CD4-positive, alpha-beta T cell (primary cell): ENCODE measurements at regions of chr3 and their contacts with region 1.

Region 1: GRCh38 chr3:179147873-179148615 is at the start of gene PIK3CA:
- DNase-seq: peak; percentile 85 to 99 (median 90)
- ATAC-seq: peak; percentile 74
- H3K4me3 ChIP-seq: peak within 1 kb of the TSS; percentile 73
- H3K4me3 Mint-ChIP-seq: peak within 1 kb of the TSS; percentile 95
- H3K27ac ChIP-seq: peak within 1 kb of the TSS; percentile 90 to 100
- H3K27ac Mint-ChIP-seq: peak within 1 kb of the TSS; percentile 91
- H3K4me1 ChIP-seq: peaks cover 2% of the 10 kb centered on the region
- H3K4me1 Mint-ChIP-seq: peaks cover 40% of the 10 kb centered on the region
- H3K27me3 ChIP-seq: no peaks in the 10 kb centered on the region
- H3K27me3 Mint-ChIP-seq: no peaks in the 10 kb centered on the region
- CTCF ChIP-seq: no peak
- total RNA-seq, gene PIK3CA: 57.1 to 63.1 TPM

Region 2: GRCh38 chr3:178623666-178624255 is 524.3 kb before region 1 on chr3:
- CTCF ChIA-PET with region 1: no interaction called
- POLR2A ChIA-PET with region 1: no interaction called
- intact Hi-C with region 1: no loop called
- DNase-seq: no peak
- ATAC-seq: no peak
- H3K4me3 ChIP-seq: no peak overlapping the region
- H3K4me3 Mint-ChIP-seq: no peak overlapping the region
- H3K27ac ChIP-seq: no peak overlapping the region
- H3K27ac Mint-ChIP-seq: no peak overlapping the region
- H3K4me1 ChIP-seq: no peaks in the 10 kb centered on the region
- H3K4me1 Mint-ChIP-seq: no peaks in the 10 kb centered on the region
- H3K27me3 ChIP-seq: no peaks in the 10 kb centered on the region
- H3K27me3 Mint-ChIP-seq: no peaks in the 10 kb centered on the region
- CTCF ChIP-seq: no peak

Region 3: DNA sequence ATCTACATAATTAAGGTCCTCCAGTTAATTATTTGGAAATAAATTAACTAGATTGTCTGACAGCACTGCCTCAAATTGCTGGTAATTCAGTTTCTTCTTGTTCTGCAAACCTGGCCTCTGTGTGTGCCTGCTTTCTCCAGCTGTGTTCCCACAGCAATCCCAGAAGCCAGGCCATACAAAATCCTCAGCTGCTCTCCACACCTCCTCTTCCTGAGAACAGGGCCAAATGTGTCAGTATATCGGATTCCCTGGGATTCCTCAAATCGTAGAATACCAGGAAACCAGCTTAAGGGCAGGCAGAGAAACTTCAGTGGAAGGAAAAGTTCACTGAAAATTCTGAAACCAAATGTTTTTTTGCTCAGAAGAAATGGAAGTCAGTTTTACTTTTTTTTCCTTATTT is 337.9 kb before region 1 on chr3:
- CTCF ChIA-PET with region 1: no interaction called
- POLR2A ChIA-PET with region 1: no interaction called
- intact Hi-C with region 1: no loop called
- DNase-seq: no peak
- ATAC-seq: no peak
- H3K4me3 ChIP-seq: no peak overlapping the region
- H3K4me3 Mint-ChIP-seq: no peak overlapping the region
- H3K27ac ChIP-seq: no peak overlapping the region
- H3K27ac Mint-ChIP-seq: no peak overlapping the region
- H3K4me1 ChIP-seq: no peaks in the 10 kb centered on the region
- H3K4me1 Mint-ChIP-seq: no peaks in the 10 kb centered on the region
- H3K27me3 ChIP-seq: no peaks in the 10 kb centered on the region
- H3K27me3 Mint-ChIP-seq: peaks cover 4% of the 10 kb centered on the region
- CTCF ChIP-seq: no peak

Region 4: GRCh38 chr3:179037351-179037750 is 110.7 kb before region 1 on chr3:
- CTCF ChIA-PET with region 1: no interaction called
- POLR2A ChIA-PET with region 1: interaction called, 29 read pairs
- intact Hi-C with region 1: no loop called
- DNase-seq: peak; percentile 27 to 78 (median 55)
- ATAC-seq: peak; percentile 95
- H3K4me3 ChIP-seq: peak overlapping the region; percentile 28
- H3K4me3 Mint-ChIP-seq: peak overlapping the region; percentile 73
- H3K27ac ChIP-seq: peak overlapping the region; percentile 47 to 63
- H3K27ac Mint-ChIP-seq: no peak overlapping the region
- H3K4me1 ChIP-seq: peaks cover 28% of the 10 kb centered on the region
- H3K4me1 Mint-ChIP-seq: peaks cover 12% of the 10 kb centered on the region
- H3K27me3 ChIP-seq: no peaks in the 10 kb centered on the region
- H3K27me3 Mint-ChIP-seq: no peaks in the 10 kb centered on the region
- CTCF ChIP-seq: no peak

Region 5: GRCh38 chr3:179108086-179108485 is 40.0 kb before region 1 on chr3:
- CTCF ChIA-PET with region 1: no interaction called
- POLR2A ChIA-PET with region 1: interaction called, 3 read pairs
- intact Hi-C with region 1: loop called in 1 of 2 experiments (anchors 5 kb)
- DNase-seq: no peak
- ATAC-seq: no peak
- H3K4me3 ChIP-seq: no peak overlapping the region
- H3K4me3 Mint-ChIP-seq: no peak overlapping the region
- H3K27ac ChIP-seq: no peak overlapping the region
- H3K27ac Mint-ChIP-seq: no peak overlapping the region
- H3K4me1 ChIP-seq: no peaks in the 10 kb centered on the region
- H3K4me1 Mint-ChIP-seq: no peaks in the 10 kb centered on the region
- H3K27me3 ChIP-seq: no peaks in the 10 kb centered on the region
- H3K27me3 Mint-ChIP-seq: peaks cover 13% of the 10 kb centered on the region
- CTCF ChIP-seq: no peak

Region 6: GRCh38 chr3:179196098-179196497 is 48.1 kb after region 1 on chr3:
- CTCF ChIA-PET with region 1: interaction called, 3 read pairs
- POLR2A ChIA-PET with region 1: interaction called, 28 read pairs
- intact Hi-C with region 1: loop called (anchors 1 to 5 kb)
- DNase-seq: peak in 4 of 14 experiments; percentile 9 to 72 (median 66)
- ATAC-seq: peak; percentile 85
- H3K4me3 ChIP-seq: no peak overlapping the region
- H3K4me3 Mint-ChIP-seq: peak overlapping the region; percentile 54
- H3K27ac ChIP-seq: no peak overlapping the region
- H3K27ac Mint-ChIP-seq: peak overlapping the region; percentile 81
- H3K4me1 ChIP-seq: peaks cover 13% of the 10 kb centered on the region
- H3K4me1 Mint-ChIP-seq: peaks cover 65% of the 10 kb centered on the region
- H3K27me3 ChIP-seq: no peaks in the 10 kb centered on the region
- H3K27me3 Mint-ChIP-seq: no peaks in the 10 kb centered on the region
- CTCF ChIP-seq: no peak

Region 7: GRCh38 chr3:179299999-179300613 is 152.1 kb after region 1 on chr3:
- CTCF ChIA-PET with region 1: no interaction called
- POLR2A ChIA-PET with region 1: no interaction called
- intact Hi-C with region 1: no loop called
- DNase-seq: no peak
- ATAC-seq: no peak
- H3K4me3 ChIP-seq: no peak overlapping the region
- H3K4me3 Mint-ChIP-seq: no peak overlapping the region
- H3K27ac ChIP-seq: no peak overlapping the region
- H3K27ac Mint-ChIP-seq: no peak overlapping the region
- H3K4me1 ChIP-seq: no peaks in the 10 kb centered on the region
- H3K4me1 Mint-ChIP-seq: no peaks in the 10 kb centered on the region
- H3K27me3 ChIP-seq: no peaks in the 10 kb centered on the region
- H3K27me3 Mint-ChIP-seq: peaks cover under 1% of the 10 kb centered on the region
- CTCF ChIP-seq: no peak

Region 8: GRCh38 chr3:179347345-179348194 is 199.5 kb after region 1 on chr3 and contains the start of gene MFN1:
- CTCF ChIA-PET with region 1: interaction called, 3 read pairs
- POLR2A ChIA-PET with region 1: interaction called, 29 read pairs
- intact Hi-C with region 1: no loop called
- DNase-seq: peak; percentile 72 to 95 (median 84)
- ATAC-seq: peak; percentile 99
- H3K4me3 ChIP-seq: peak within 1 kb of the TSS; percentile 86
- H3K4me3 Mint-ChIP-seq: peak within 1 kb of the TSS; percentile 99
- H3K27ac ChIP-seq: peak within 1 kb of the TSS; percentile 63 to 74
- H3K27ac Mint-ChIP-seq: peak within 1 kb of the TSS; percentile 90
- H3K4me1 ChIP-seq: peaks cover 19% of the 10 kb centered on the region
- H3K4me1 Mint-ChIP-seq: peaks cover 28% of the 10 kb centered on the region
- H3K27me3 ChIP-seq: no peaks in the 10 kb centered on the region
- H3K27me3 Mint-ChIP-seq: no peaks in the 10 kb centered on the region
- CTCF ChIP-seq: no peak
- total RNA-seq, gene MFN1: 20.7 to 26.1 TPM

Region 9: DNA sequence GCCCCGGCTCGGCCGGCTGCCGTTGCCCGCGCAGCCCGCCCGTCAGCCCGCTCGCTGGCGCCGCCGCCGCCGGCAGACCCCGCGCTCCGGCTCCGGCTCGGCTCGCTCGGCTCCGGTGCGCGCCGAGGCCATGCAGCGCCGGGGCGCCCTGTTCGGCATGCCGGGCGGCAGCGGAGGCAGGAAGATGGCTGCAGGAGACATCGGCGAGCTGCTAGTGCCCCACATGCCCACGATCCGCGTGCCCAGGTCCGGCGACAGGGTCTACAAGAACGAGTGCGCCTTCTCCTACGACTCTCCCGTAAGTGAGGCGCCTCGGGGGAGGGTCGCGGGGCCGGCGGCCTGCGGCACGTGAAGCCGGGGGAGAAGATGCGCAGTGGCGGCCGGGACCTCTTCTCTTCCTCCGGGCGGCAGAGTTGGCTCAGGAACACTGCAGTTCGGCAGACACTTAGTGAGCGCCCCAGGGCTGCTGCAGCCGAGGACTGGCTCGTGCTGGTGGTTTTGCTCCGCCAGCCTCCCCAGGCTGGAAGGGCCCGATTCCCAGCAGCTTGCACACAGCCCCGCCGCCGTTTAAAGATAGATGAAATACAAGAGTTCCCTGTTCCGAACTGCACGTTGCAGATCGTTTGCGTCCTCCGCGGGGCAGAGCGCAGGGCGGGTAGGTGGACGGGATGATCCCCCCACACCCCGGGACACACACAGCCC is 505.2 kb after region 1 on chr3:
- CTCF ChIA-PET with region 1: no interaction called
- POLR2A ChIA-PET with region 1: interaction called, 12 read pairs
- intact Hi-C with region 1: no loop called
- DNase-seq: peak; percentile 44 to 82 (median 56)
- ATAC-seq: peak; percentile 64
- H3K4me3 ChIP-seq: peak overlapping the region; percentile 94
- H3K4me3 Mint-ChIP-seq: peak overlapping the region; percentile 98
- H3K27ac ChIP-seq: peak overlapping the region; percentile 47 to 48
- H3K27ac Mint-ChIP-seq: peak overlapping the region; percentile 91
- H3K4me1 ChIP-seq: peaks cover 22% of the 10 kb centered on the region
- H3K4me1 Mint-ChIP-seq: peaks cover 45% of the 10 kb centered on the region
- H3K27me3 ChIP-seq: no peaks in the 10 kb centered on the region
- H3K27me3 Mint-ChIP-seq: no peaks in the 10 kb centered on the region
- CTCF ChIP-seq: no peak

Region 10: GRCh38 chr3:179706233-179706632 is 558.2 kb after region 1 on chr3:
- CTCF ChIA-PET with region 1: no interaction called
- POLR2A ChIA-PET with region 1: no interaction called
- intact Hi-C with region 1: no loop called
- DNase-seq: no peak
- ATAC-seq: no peak
- H3K4me3 ChIP-seq: no peak overlapping the region
- H3K4me3 Mint-ChIP-seq: no peak overlapping the region
- H3K27ac ChIP-seq: no peak overlapping the region
- H3K27ac Mint-ChIP-seq: no peak overlapping the region
- H3K4me1 ChIP-seq: no peaks in the 10 kb centered on the region
- H3K4me1 Mint-ChIP-seq: no peaks in the 10 kb centered on the region
- H3K27me3 ChIP-seq: no peaks in the 10 kb centered on the region
- H3K27me3 Mint-ChIP-seq: no peaks in the 10 kb centered on the region
- CTCF ChIP-seq: no peak